ENCODE measurements at regions of chr18 and their contacts with region 1.

Region 1: DNA sequence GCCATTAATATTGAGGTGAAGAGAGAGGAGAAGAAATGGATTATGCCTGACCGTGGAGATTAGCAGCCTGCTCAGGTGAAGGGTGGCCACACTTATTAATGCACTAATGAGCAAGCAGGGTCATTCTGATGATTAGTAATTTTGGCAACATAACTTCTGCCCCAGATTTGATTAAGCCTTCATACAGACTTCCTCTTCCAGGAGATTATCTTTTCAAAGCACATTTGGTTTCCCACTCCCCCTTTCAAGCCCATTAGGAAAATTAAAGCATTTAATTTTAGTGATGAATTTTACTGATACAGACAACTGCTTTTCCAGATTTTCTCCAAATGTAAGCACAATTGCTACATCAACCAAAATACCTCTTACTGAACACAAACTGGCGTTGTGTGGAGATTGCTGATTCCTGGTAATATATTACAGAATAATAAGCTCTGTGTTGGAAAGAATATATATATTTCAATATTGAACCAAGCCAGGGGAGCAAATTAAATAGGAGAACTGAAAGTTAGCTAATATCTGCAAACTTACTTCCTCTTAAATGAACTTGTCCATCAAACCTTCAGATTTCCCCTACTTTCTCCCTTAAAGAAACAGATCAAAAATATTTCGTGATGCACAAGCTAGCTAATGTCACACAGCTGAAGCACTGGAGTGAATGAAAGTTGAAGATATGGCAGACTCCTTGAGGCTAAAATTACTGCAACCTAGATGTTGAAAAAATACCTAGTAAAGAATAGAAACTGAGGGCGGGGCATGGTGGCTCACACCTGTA is 140.8 kb downstream of the FAM210A start:
- DNase-seq: no peak
- ATAC-seq: peak; percentile 66
- H3K4me3 ChIP-seq: no peak overlapping the region
- H3K27ac ChIP-seq: peak overlapping the region; percentile 54
- H3K4me1 ChIP-seq: peaks cover 29% of the 10 kb centered on the region
- H3K27me3 ChIP-seq: no peaks in the 10 kb centered on the region
- CTCF ChIP-seq: no peak
- EP300 ChIP-seq: peak; percentile 15 to 46; a peak in 3 of 4 replicates
- POLR2A ChIP-seq: no peak
- RAD21 ChIP-seq: no peak

Region 2: DNA sequence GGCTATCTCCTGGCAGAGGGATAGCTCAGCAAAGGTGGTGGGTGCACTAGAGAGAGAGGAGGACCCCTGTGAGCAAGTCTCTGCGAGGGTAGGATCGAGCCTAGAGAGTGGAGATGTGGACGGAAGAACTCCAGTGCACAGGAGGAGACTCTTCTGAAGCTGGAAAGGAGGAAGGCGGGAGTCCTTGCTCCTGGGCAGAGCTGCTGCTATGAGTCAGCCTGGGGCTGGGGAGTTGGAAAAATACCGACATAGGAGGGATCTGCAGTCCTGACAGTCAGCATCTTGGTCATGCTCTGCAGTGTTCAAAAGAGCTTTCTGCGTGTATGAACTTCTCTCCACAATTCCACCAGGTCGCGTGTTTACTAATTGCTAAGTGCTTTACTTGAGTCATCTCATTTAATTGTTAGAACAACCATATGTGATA is 133.2 kb before region 1 on chr18:
- CTCF ChIA-PET with region 1: no interaction called
- POLR2A ChIA-PET with region 1: no interaction called
- RAD21 ChIA-PET with region 1: no interaction called
- SMC1A ChIA-PET with region 1: no interaction called
- in situ Hi-C with region 1: no loop called
- intact Hi-C with region 1: no loop called
- DNase-seq: no peak
- ATAC-seq: no peak
- H3K4me3 ChIP-seq: no peak overlapping the region
- H3K27ac ChIP-seq: no peak overlapping the region
- H3K4me1 ChIP-seq: peaks cover 30% of the 10 kb centered on the region
- H3K27me3 ChIP-seq: no peaks in the 10 kb centered on the region; a peak in 2 of 4 replicates
- CTCF ChIP-seq: no peak
- EP300 ChIP-seq: no peak
- POLR2A ChIP-seq: no peak
- RAD21 ChIP-seq: no peak

Region 3: GRCh38 chr18:13566941-13567746 is 18.4 kb before region 1 on chr18:
- CTCF ChIA-PET with region 1: interaction called, 14 read pairs
- POLR2A ChIA-PET with region 1: interaction called, 121 read pairs
- RAD21 ChIA-PET with region 1: interaction called, 156 read pairs
- SMC1A ChIA-PET with region 1: interaction called, 121 read pairs
- in situ Hi-C with region 1: no loop called
- intact Hi-C with region 1: loop called (anchors 1 kb)
- DNase-seq: peak; percentile 89
- ATAC-seq: peak; percentile 71
- H3K4me3 ChIP-seq: peak overlapping the region; percentile 57
- H3K27ac ChIP-seq: peak overlapping the region; percentile 100
- H3K4me1 ChIP-seq: peaks cover 76% of the 10 kb centered on the region
- H3K27me3 ChIP-seq: no peaks in the 10 kb centered on the region
- CTCF ChIP-seq: 0 out of 6 replicates have a peak, but pooled peaks of 1 of the 3 experiments have one; percentile 7
- EP300 ChIP-seq: peak; percentile 84 to 97; a peak in 3 of 4 replicates
- POLR2A ChIP-seq: peak; percentile 91
- RAD21 ChIP-seq: peak; percentile 21; the same call in 1 of the 2 replicates

Region 4: DNA sequence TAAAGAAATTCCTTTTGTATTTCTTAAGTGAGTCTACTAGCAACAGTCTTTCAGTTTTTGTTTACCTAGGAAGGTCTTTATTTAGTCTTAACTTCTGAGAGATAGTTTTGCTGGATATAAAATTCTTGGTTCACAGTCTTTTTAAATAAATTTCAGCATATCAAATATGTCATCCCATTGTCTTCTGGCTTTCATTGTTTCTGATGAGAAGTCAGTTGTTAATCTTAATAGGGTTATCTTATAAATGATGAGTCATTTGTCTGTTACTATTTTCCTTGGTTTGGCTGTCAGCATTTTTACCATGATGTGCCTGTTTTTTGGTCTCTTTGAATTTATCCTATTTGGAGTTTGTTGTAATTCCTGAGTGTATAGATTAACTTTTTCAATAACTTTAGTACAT is 11.5 kb after region 1 on chr18:
- CTCF ChIA-PET with region 1: interaction called, 5 read pairs
- POLR2A ChIA-PET with region 1: interaction called, 8 read pairs
- RAD21 ChIA-PET with region 1: interaction called, 4 read pairs
- SMC1A ChIA-PET with region 1: interaction called, 35 read pairs
- in situ Hi-C with region 1: no loop called
- intact Hi-C with region 1: no loop called
- DNase-seq: no peak
- ATAC-seq: no peak
- H3K4me3 ChIP-seq: no peak overlapping the region
- H3K27ac ChIP-seq: no peak overlapping the region
- H3K4me1 ChIP-seq: 0 out of 2 replicates have a peak, but pooled peaks cover 3% of the 10 kb centered on the region
- H3K27me3 ChIP-seq: no peaks in the 10 kb centered on the region
- CTCF ChIP-seq: no peak
- EP300 ChIP-seq: no peak
- POLR2A ChIP-seq: no peak
- RAD21 ChIP-seq: no peak

Measured in GM12878 (cell line).